Naive thymus-derived CD4-positive, alpha-beta T cell (primary cell): ENCODE measurements at regions of chr10 and their contacts with region 1.

Region 1: GRCh38 chr10:119207367-119207668 is at the start of gene GRK5:
- DNase-seq: peak; percentile 96 to 99 (median 98)
- ATAC-seq: peak; percentile 91
- H3K4me3 ChIP-seq: peak within 1 kb of the TSS; percentile 75
- H3K4me3 Mint-ChIP-seq: peak within 1 kb of the TSS; percentile 94 to 98 (median 97)
- H3K27ac ChIP-seq: peak within 1 kb of the TSS; percentile 89
- H3K27ac Mint-ChIP-seq: peak within 1 kb of the TSS; percentile 91 to 99 (median 96)
- H3K4me1 ChIP-seq: peaks cover 23 to 35% of the 10 kb centered on the region in 2 donors
- H3K4me1 Mint-ChIP-seq: peaks cover 41 to 48% (median 44%) of the 10 kb centered on the region in 7 donors
- H3K27me3 ChIP-seq: no peaks in the 10 kb centered on the region
- H3K27me3 Mint-ChIP-seq: no peaks in the 10 kb centered on the region
- total RNA-seq, gene GRK5: 20.3 to 45.2 (median 34.2) TPM

Region 2: DNA sequence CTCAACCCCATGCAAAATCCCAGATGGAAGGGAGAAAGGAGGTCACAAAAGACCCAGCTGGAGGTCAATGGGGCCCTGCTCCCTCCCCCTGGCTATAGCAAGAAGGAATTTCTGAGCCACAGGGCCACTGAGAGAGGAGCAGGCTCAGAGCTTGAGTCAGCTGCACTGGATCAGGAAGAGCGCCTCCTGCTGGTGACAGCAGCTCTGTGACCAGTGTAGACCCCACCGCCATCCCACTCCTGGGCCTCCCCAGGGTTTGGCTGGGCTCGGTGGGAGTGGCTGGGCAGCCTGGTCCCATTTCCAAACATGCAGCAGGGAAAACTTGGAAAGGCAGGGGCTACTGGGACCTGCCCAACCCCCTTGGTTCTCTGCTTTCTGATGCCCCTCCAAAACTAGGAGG is 580.4 kb before region 1 on chr10:
- CTCF ChIA-PET with region 1: no interaction called
- POLR2A ChIA-PET with region 1: no interaction called
- intact Hi-C with region 1: no loop called
- DNase-seq: no peak
- ATAC-seq: no peak
- H3K4me3 ChIP-seq: no peak overlapping the region
- H3K4me3 Mint-ChIP-seq: no peak overlapping the region
- H3K27ac ChIP-seq: no peak overlapping the region
- H3K27ac Mint-ChIP-seq: no peak overlapping the region
- H3K4me1 ChIP-seq: peaks cover 0 to 2% of the 10 kb centered on the region in 2 donors
- H3K4me1 Mint-ChIP-seq: peaks cover under 1 to 32% (median 14%) of the 10 kb centered on the region in 7 donors
- H3K27me3 ChIP-seq: no peaks in the 10 kb centered on the region
- H3K27me3 Mint-ChIP-seq: peaks cover 0 to 11% (median 0%) of the 10 kb centered on the region in 5 donors

Region 3: DNA sequence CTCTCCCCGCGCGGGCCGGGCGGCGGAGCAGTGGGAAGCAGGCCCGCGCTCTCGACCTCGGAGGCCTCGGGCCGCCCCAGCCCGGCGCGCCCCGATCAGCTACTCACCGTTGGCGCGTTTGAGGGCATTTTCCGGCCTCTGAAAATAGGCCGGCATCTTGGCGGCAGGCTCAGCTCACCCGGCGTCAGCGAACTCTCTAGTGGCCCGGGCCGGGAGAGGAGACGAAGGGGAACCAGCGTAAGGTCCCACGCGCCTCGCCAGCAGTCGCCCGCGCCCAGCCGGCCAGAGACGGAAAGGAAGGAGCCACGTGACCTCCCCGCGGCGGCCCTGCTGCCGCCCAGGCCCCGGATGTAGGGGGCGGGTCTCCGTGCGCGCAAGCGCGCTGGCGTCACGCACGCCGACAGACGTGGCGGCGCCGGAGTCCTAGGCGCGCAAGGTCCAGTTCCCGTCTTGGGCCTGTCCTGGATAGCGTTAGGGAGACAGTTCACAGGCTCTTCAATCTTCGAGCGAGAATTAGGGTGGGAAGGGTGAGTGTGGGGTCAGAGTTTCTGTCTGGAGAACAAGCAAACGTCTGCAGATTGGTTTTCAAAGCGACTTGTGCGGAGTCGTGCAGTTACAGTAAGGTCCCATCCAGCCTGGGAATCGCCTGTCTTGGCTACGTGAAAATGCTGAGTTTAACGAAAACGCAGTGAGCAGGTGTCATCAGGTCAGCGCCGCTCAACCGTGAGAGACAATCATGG is 126.6 kb before region 1 on chr10 and contains the start of gene EIF3A:
- CTCF ChIA-PET with region 1: no interaction called
- POLR2A ChIA-PET with region 1: interaction called, 3 read pairs
- intact Hi-C with region 1: loop called in 1 of 2 experiments (anchors 1 kb)
- DNase-seq: peak; percentile 87 to 98 (median 93)
- ATAC-seq: peak; percentile 90
- H3K4me3 ChIP-seq: peak within 1 kb of the TSS; percentile 83
- H3K4me3 Mint-ChIP-seq: peak within 1 kb of the TSS; percentile 86 to 99 (median 98)
- H3K27ac ChIP-seq: peak within 1 kb of the TSS; percentile 91
- H3K27ac Mint-ChIP-seq: peak within 1 kb of the TSS; percentile 93 to 100 (median 98)
- H3K4me1 ChIP-seq: peaks cover 6 to 26% of the 10 kb centered on the region in 2 donors
- H3K4me1 Mint-ChIP-seq: peaks cover 28 to 55% (median 45%) of the 10 kb centered on the region in 7 donors
- H3K27me3 ChIP-seq: no peaks in the 10 kb centered on the region
- H3K27me3 Mint-ChIP-seq: peaks cover 0 to 2% (median 0%) of the 10 kb centered on the region in 5 donors
- total RNA-seq, gene EIF3A: 87.8 to 137 (median 96.0) TPM

Region 4: DNA sequence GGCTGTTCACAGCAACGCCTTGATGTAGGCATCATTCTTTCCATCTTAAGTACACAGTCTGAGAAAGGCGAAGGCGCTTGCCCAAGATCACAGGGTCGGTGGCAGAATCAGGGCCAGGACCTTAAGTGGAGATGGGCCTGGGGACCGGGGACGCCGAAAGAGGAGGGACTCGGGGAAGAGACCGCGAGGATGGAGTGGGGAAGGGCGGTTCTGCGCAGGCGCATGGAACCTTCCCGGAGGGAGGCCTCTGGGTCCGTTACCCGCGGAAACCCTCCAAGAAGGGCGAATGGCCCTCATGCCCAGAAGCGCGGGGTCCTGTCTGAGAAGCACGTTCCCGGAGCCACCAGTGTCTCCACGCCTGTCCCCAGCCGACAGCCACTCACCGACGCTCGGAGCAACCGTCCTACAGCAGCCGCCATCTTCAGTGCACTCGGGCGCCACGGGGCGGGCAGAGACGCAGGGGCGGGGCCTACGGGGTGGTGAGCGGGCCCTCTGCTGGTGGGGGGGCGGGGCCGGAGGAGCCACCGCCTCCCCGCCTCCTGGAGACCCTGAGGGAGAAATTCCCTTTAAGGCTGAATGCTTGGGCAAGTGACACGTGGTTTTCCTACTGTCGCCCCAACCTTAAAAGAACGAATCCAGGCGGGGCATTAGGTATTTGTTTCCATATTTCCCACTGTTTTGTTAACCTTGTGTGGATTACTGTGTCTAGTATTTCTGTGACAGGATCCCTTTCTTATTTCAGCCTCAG is 28.8 kb before region 1 on chr10 and contains the start of gene PRDX3:
- CTCF ChIA-PET with region 1: no interaction called
- POLR2A ChIA-PET with region 1: interaction called, 3 read pairs
- intact Hi-C with region 1: loop called (anchors 1 kb)
- DNase-seq: peak; percentile 81 to 96 (median 89)
- ATAC-seq: peak; percentile 100
- H3K4me3 ChIP-seq: peak within 1 kb of the TSS; percentile 97
- H3K4me3 Mint-ChIP-seq: peak within 1 kb of the TSS; percentile 91 to 99 (median 96)
- H3K27ac ChIP-seq: peak within 1 kb of the TSS; percentile 79
- H3K27ac Mint-ChIP-seq: peak within 1 kb of the TSS; percentile 86 to 98 (median 93)
- H3K4me1 ChIP-seq: peaks cover 7 to 13% of the 10 kb centered on the region in 2 donors
- H3K4me1 Mint-ChIP-seq: peaks cover 13 to 48% (median 36%) of the 10 kb centered on the region in 7 donors
- H3K27me3 ChIP-seq: no peaks in the 10 kb centered on the region
- H3K27me3 Mint-ChIP-seq: no peaks in the 10 kb centered on the region
- total RNA-seq, gene PRDX3: 11.7 to 120 (median 35.4) TPM

Region 5: GRCh38 chr10:119305860-119306513 is 98.7 kb after region 1 on chr10:
- CTCF ChIA-PET with region 1: interaction called, 36 read pairs
- POLR2A ChIA-PET with region 1: interaction called, 65 read pairs
- intact Hi-C with region 1: loop called (anchors 1 kb)
- DNase-seq: peak; percentile 38 to 93 (median 70)
- ATAC-seq: peak; percentile 85
- H3K4me3 ChIP-seq: peak overlapping the region; percentile 65
- H3K4me3 Mint-ChIP-seq: peak overlapping the region; percentile 71 to 93 (median 90)
- H3K27ac ChIP-seq: peak overlapping the region; percentile 90
- H3K27ac Mint-ChIP-seq: peak overlapping the region; percentile 94 to 99 (median 97)
- H3K4me1 ChIP-seq: peaks cover 47 to 53% of the 10 kb centered on the region in 2 donors
- H3K4me1 Mint-ChIP-seq: peaks cover 50 to 87% (median 74%) of the 10 kb centered on the region in 7 donors
- H3K27me3 ChIP-seq: no peaks in the 10 kb centered on the region
- H3K27me3 Mint-ChIP-seq: peaks cover 0 to 2% (median 0%) of the 10 kb centered on the region in 5 donors

Region 6: DNA sequence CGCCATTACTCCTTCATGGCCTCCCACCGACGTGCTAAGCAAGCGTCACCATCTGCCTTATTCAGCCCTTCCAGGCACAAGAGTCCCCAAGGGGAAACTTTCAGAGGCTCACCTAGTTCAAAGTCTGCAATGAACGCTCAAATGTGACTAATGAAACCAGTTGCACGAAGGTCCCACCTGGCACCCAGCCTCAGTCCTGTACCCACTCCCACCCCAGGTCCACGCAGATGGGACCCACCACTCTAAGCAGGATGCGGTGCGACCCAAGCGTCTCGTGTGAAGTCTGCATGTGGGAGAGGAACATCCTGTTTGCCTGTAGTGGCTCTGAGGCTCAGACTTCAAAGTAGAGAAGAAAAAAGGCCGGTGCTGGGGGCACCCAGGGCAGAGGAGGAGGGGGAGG is 294.9 kb after region 1 on chr10:
- CTCF ChIA-PET with region 1: interaction called, 4 read pairs
- POLR2A ChIA-PET with region 1: interaction called, 4 read pairs
- intact Hi-C with region 1: loop called in 1 of 2 experiments (anchors 1 kb)
- DNase-seq: peak; percentile 50 to 93 (median 91)
- ATAC-seq: peak; percentile 91
- H3K4me3 ChIP-seq: peak overlapping the region; percentile 46
- H3K4me3 Mint-ChIP-seq: peak overlapping the region; percentile 70 to 85 (median 82)
- H3K27ac ChIP-seq: peak overlapping the region; percentile 98
- H3K27ac Mint-ChIP-seq: peak overlapping the region; percentile 95 to 100 (median 99)
- H3K4me1 ChIP-seq: peaks cover 39 to 88% of the 10 kb centered on the region in 2 donors
- H3K4me1 Mint-ChIP-seq: peaks cover 56 to 98% (median 92%) of the 10 kb centered on the region in 7 donors
- H3K27me3 ChIP-seq: no peaks in the 10 kb centered on the region
- H3K27me3 Mint-ChIP-seq: no peaks in the 10 kb centered on the region

Region 7: DNA sequence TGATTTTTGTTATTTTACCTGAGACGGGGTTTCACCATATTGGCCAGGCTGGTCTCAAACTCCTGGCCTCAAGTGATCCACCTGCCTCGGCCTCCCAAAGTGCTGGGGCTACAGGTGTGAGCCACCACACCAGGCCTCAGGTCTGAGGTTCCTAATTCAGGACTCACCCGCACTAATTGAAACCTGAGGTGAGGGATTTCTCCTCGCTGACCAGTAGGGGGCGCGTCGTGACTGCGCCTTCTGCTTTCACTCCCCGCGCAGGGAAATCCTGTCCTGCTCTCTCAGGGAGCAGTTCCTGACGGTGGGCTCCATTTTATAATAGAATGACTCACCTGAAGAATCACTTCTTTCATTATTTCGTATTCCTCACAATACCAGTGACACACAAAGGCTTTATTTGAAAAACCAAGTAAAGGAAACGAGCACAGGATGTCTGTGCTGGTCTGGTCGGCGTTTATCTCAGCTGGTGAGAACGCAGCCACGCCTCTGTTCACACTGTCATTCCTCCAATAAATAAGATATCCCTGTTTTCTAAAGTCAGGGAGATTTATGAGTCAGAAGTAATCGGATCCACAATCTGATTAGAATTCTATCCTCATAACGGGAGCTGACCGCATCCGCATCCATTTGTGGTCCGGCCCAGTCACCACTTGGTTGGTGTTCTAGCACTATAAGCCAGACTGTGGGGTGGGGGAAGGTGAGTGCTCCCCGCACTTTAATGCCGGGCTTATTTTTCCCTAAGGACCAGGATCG is 479.3 kb after region 1 on chr10:
- CTCF ChIA-PET with region 1: no interaction called
- POLR2A ChIA-PET with region 1: no interaction called
- intact Hi-C with region 1: no loop called
- DNase-seq: peak; percentile 62 to 80 (median 75)
- ATAC-seq: peak; percentile 92
- H3K4me3 ChIP-seq: peak overlapping the region; percentile 58
- H3K4me3 Mint-ChIP-seq: peak overlapping the region; percentile 51 to 86 (median 76)
- H3K27ac ChIP-seq: peak overlapping the region; percentile 40
- H3K27ac Mint-ChIP-seq: peak overlapping the region in 8 of 9 donors; percentile 2 to 87 (median 63)
- H3K4me1 ChIP-seq: peaks cover 0 to 6% of the 10 kb centered on the region in 2 donors
- H3K4me1 Mint-ChIP-seq: peaks cover 12 to 25% (median 21%) of the 10 kb centered on the region in 7 donors
- H3K27me3 ChIP-seq: no peaks in the 10 kb centered on the region
- H3K27me3 Mint-ChIP-seq: peaks cover 0 to 3% (median 0%) of the 10 kb centered on the region in 5 donors

Region 8: GRCh38 chr10:119859420-119860258 is 652.3 kb after region 1 on chr10:
- CTCF ChIA-PET with region 1: interaction called, 3 read pairs
- POLR2A ChIA-PET with region 1: no interaction called
- intact Hi-C with region 1: loop called in 1 of 2 experiments (anchors 5 kb)
- DNase-seq: peak in 7 of 9 donors; percentile 21 to 62 (median 40)
- ATAC-seq: peak; percentile 81
- H3K4me3 ChIP-seq: no peak overlapping the region
- H3K4me3 Mint-ChIP-seq: peak overlapping the region in 1 of 10 donors; percentile 18
- H3K27ac ChIP-seq: no peak overlapping the region
- H3K27ac Mint-ChIP-seq: peak overlapping the region in 3 of 9 donors; percentile 13 to 49 (median 17)
- H3K4me1 ChIP-seq: no peaks in the 10 kb centered on the region
- H3K4me1 Mint-ChIP-seq: peaks cover 16 to 47% (median 40%) of the 10 kb centered on the region in 7 donors
- H3K27me3 ChIP-seq: no peaks in the 10 kb centered on the region
- H3K27me3 Mint-ChIP-seq: no peaks in the 10 kb centered on the region

Region 9: GRCh38 chr10:120221873-120222485 is 1014.7 kb after region 1 on chr10:
- CTCF ChIA-PET with region 1: no interaction called
- POLR2A ChIA-PET with region 1: no interaction called
- intact Hi-C with region 1: no loop called
- DNase-seq: no peak
- ATAC-seq: no peak
- H3K4me3 ChIP-seq: no peak overlapping the region
- H3K4me3 Mint-ChIP-seq: no peak overlapping the region
- H3K27ac ChIP-seq: no peak overlapping the region
- H3K27ac Mint-ChIP-seq: no peak overlapping the region
- H3K4me1 ChIP-seq: no peaks in the 10 kb centered on the region
- H3K4me1 Mint-ChIP-seq: no peaks in the 10 kb centered on the region
- H3K27me3 ChIP-seq: no peaks in the 10 kb centered on the region
- H3K27me3 Mint-ChIP-seq: peaks cover 0 to 30% (median 16%) of the 10 kb centered on the region in 5 donors